ENCODE measurements at regions of chr11 and their contacts with region 1.

Region 1: GRCh38 chr11:3642071-3642951 is 519 bp upstream of the ART5 start:
- DNase-seq: peak; percentile 86 to 93
- ATAC-seq: peak; percentile 71 to 80 (median 76)
- H3K4me3 ChIP-seq: peak overlapping the region; percentile 78
- H3K27ac ChIP-seq: peak overlapping the region; percentile 99
- H3K4me1 ChIP-seq: peaks cover 37% of the 10 kb centered on the region
- H3K27me3 ChIP-seq: no peaks in the 10 kb centered on the region
- CTCF ChIP-seq: no peak

Region 2: GRCh38 chr11:3043315-3043871 is 598.9 kb before region 1 on chr11:
- intact Hi-C with region 1: loop called in 1 of 2 experiments (anchors 5 kb)
- DNase-seq: peak; percentile 92 to 97
- ATAC-seq: peak; percentile 80 to 85 (median 82)
- H3K4me3 ChIP-seq: peak overlapping the region; percentile 30
- H3K27ac ChIP-seq: peak overlapping the region; percentile 96
- H3K4me1 ChIP-seq: peaks cover 60% of the 10 kb centered on the region
- H3K27me3 ChIP-seq: no peaks in the 10 kb centered on the region
- CTCF ChIP-seq: no peak

Region 3: DNA sequence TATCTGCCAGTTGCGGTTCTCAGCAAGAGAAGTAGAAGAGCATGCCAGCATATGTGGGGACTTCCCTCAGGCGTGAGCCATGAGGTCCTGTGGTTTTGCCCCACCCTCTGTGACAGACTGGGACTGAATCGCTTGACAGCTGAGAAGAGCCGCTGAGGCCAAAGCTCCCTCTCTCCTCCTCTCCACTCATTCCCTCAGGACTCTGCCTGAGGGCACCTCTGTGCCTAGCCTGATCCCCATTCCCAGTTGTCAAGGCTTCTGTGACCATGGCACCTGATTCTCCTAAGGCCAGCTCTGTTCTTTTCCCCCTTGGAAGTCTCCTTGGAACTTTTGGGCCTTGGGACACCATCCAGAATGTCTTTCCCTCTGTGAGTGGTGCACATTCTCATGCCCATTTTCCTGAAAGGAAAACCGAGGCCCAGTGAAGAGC is 27.6 kb before region 1 on chr11:
- intact Hi-C with region 1: loop called in 1 of 2 experiments (anchors 2 kb)
- DNase-seq: peak; percentile 47 to 83
- ATAC-seq: peak; percentile 92 to 95 (median 93)
- H3K4me3 ChIP-seq: peak overlapping the region; percentile 56
- H3K27ac ChIP-seq: peak overlapping the region; percentile 94
- H3K4me1 ChIP-seq: peaks cover 18% of the 10 kb centered on the region
- H3K27me3 ChIP-seq: no peaks in the 10 kb centered on the region
- CTCF ChIP-seq: no peak

Region 4: DNA sequence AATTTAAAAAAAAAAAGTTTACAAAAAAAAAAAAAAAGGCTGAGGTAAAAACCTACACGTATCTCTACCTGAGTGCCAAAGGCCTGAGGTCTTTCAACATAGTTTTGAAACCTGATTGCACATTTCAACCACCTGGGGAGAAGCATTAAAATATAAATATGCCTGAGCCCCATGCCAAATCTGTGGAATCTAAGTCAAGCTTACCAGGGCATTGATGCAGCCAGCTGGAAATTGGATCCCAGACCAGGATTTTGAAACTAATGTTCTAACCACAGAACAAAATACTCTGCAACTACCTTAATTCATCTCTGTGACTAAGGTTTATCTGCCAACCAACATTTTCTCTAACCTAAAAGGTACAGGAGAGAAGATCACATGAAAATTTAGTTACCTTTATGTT is 67.7 kb after region 1 on chr11:
- intact Hi-C with region 1: no loop called
- DNase-seq: no peak
- ATAC-seq: peak; percentile 85 to 92 (median 90)
- H3K4me3 ChIP-seq: peak overlapping the region; percentile 15
- H3K27ac ChIP-seq: peak overlapping the region; percentile 83
- H3K4me1 ChIP-seq: peaks cover 48% of the 10 kb centered on the region
- H3K27me3 ChIP-seq: no peaks in the 10 kb centered on the region
- CTCF ChIP-seq: no peak